Common myeloid progenitor, CD34-positive (primary cell): ENCODE measurements at regions of chr20 and their contacts with region 1.

Region 1: GRCh38 chr20:48799706-48800105 is 28.1 kb downstream of the PREX1 start:
- DNase-seq: peak in 2 of 3 donors; percentile 40 to 69
- H3K4me3 ChIP-seq: peak overlapping the region in 1 of 7 experiments; percentile 15
- H3K27ac ChIP-seq: peak overlapping the region in 1 of 2 experiments; percentile 63
- H3K4me1 ChIP-seq: peaks cover 2 to 45% (median 36%) of the 10 kb centered on the region in 4 experiments
- H3K27me3 ChIP-seq: no peaks in the 10 kb centered on the region

Region 2: GRCh38 chr20:48787861-48788375 is 11.8 kb before region 1 on chr20:
- CTCF ChIA-PET with region 1: interaction called, 15 read pairs
- POLR2A ChIA-PET with region 1: interaction called, 5 read pairs
- DNase-seq: peak; percentile 82 to 93 (median 88)
- H3K4me3 ChIP-seq: peak overlapping the region in 5 of 7 experiments; percentile 20 to 59 (median 47)
- H3K27ac ChIP-seq: peak overlapping the region; percentile 80 to 86
- H3K4me1 ChIP-seq: peaks cover 18 to 90% (median 84%) of the 10 kb centered on the region in 4 experiments
- H3K27me3 ChIP-seq: no peaks in the 10 kb centered on the region